Brain microvascular endothelial cell (primary cell): ENCODE measurements at regions of chr12 and their contacts with region 1.

Region 1: DNA sequence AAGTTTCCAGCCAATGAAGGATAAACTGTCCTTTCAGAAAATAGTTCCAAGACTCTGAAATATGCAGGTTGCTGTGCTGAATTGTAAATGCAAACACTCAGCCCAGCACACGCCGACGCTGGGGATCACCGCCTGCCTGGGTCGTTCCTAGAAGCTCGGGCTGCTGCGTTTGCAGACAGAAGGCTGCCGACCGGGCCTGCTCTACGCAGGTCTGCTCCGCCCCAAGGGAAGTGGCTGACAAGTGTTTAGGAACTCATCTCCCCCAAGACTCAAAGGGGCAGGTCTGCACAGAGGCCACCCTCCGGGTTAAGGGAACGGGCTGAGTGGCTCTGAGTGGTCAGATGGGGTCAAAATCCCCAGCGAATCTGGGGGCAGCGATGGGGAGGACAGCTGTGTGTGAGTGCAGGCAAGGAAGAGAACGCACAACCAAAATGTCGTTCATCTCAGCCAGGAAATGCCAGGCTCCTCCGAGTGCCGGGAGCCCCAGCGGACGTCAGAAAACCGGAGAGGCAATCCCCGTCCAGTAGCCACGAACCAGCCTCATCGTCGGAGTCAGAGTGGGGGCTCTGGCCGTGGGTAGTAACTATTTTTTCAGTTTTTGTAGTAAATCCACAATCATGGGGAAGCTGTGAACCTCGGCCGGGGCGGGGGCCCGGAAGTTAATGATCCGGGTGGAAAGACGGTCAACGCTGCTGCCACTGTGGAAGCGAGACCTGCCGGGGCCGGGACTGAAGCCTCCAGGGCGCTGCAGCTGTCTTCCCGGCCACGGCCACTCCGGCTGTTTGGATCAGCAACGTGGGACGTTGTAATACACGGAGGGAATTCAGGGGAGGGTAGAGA is 6.0 kb downstream of the GALNT9 start:
- DNase-seq: no peak
- H3K4me3 ChIP-seq: no peak overlapping the region
- H3K27ac ChIP-seq: no peak overlapping the region
- H3K27me3 ChIP-seq: peaks cover 20% of the 10 kb centered on the region
- CTCF ChIP-seq: no peak

Region 2: DNA sequence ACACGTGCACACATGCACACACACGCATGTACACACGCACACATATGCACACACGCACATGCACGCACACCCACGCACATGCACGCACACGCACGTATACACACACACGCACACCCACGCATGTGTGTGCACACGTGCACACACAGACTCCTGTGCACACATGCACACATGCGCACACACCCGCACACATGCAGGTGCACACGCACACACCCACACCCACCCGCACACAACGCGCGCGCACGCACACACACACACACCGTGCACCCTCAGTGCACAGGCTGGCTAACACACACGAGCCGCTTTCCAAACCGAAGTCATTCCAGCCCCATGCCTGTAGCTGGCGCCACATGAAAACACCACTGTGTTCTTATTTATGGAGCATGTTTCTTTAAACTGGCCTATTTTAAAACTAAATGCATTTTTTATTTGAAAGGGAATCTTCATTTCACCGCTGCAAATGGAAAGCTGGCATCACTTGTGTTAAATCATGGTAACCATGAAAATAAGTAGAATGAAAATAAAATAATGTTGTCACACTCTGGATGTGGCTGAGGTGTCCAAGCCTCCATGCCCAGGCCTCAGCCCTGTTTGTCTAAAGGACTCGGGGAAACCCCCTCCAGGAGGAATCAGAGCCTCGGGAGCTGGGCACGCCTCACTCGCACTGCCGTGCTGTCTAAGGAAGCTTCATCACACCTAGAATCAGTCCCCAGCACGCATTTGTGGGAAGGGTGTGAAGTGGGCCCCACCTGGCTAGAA is 39.1 kb before region 1 on chr12:
- in situ Hi-C with region 1: loop called (anchors 5 kb)
- DNase-seq: peak; percentile 39
- H3K4me3 ChIP-seq: no peak overlapping the region
- H3K27ac ChIP-seq: no peak overlapping the region
- H3K27me3 ChIP-seq: peaks cover 28% of the 10 kb centered on the region
- CTCF ChIP-seq: peak; percentile 52